Aorta (tissue), 5 donors: ENCODE measurements at regions of chr9 and their contacts with region 1.

Region 1: GRCh38 chr9:4792572-4793458 is at the start of gene RCL1:
- DNase-seq: peak; percentile 97 to 98
- ATAC-seq: peak; percentile 100
- H3K4me3 ChIP-seq: peak within 1 kb of the TSS; percentile 67 to 94
- H3K27ac ChIP-seq: peak within 1 kb of the TSS; percentile 28 to 48
- H3K4me1 ChIP-seq: peaks cover 2 to 4% of the 10 kb centered on the region in 2 donors
- H3K27me3 ChIP-seq: no peaks in the 10 kb centered on the region
- total RNA-seq, gene RCL1: 32.3 to 41.9 TPM

Region 2: GRCh38 chr9:4740638-4741364 is 52.0 kb before region 1 on chr9 and contains the start of gene AK3:
- intact Hi-C with region 1: no loop called
- DNase-seq: peak; percentile 91 to 94
- ATAC-seq: peak; percentile 95
- H3K4me3 ChIP-seq: peak within 1 kb of the TSS; percentile 45 to 60
- H3K27ac ChIP-seq: peak within 1 kb of the TSS; percentile 24 to 73
- H3K4me1 ChIP-seq: peaks cover 0 to 2% of the 10 kb centered on the region in 2 donors
- H3K27me3 ChIP-seq: no peaks in the 10 kb centered on the region
- total RNA-seq, gene AK3: 39.4 to 51.4 TPM

Region 3: DNA sequence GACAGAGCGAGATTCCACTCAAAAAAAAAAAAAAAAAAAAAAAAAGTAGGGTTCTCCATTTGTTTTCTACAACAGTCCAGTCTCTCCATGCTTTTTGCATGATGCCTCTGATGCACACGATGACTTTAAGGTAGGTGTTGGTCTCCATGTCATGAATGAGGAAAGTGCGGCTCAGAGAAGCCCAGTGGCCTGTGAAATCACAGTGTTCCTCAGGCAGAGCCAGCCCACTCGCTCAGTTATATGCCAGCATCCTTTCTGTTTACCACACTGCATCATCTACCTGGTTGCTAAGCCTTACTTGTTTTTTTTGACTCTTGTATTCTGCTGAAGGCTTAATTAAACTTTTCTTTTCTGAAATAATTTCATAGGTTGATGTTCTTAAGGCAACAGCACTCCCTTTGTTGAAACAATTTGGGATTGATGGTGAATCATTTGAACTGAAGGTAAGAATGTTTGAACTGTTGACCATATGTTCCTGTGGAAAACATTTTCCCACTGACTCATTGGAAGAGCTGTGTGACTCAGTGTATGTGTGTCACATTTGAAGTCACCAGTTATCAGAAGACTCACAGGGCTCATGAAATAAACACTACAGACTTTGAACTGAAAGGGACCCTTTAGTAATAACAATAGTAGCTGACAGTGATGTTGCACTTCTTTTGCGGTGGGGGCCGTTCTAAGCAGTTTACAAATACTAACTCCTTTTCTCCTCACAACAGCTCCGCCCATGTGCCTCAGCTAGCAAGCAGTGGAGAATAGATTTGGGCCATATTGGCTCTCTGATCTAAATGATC is 40.2 kb after region 1 on chr9:
- intact Hi-C with region 1: loop called in 1 of 2 experiments (anchors 5 kb)
- DNase-seq: no peak
- ATAC-seq: no peak
- H3K4me3 ChIP-seq: no peak overlapping the region
- H3K27ac ChIP-seq: peak overlapping the region in 1 of 2 donors; percentile 17
- H3K4me1 ChIP-seq: peaks cover 5 to 10% of the 10 kb centered on the region in 2 donors
- H3K27me3 ChIP-seq: no peaks in the 10 kb centered on the region